CD4-positive, alpha-beta memory T cell (primary cell): ENCODE measurements at regions of chr15 and their contacts with region 1.

Region 1: GRCh38 chr15:38563723-38564519 is 693 bp downstream of the RASGRP1 start:
- DNase-seq: peak; percentile 82 to 89 (median 84)
- H3K4me3 ChIP-seq: peak overlapping the region; percentile 95 to 97
- H3K4me3 Mint-ChIP-seq: peak overlapping the region; percentile 94 to 99 (median 98)
- H3K27ac ChIP-seq: peak overlapping the region; percentile 89
- H3K27ac Mint-ChIP-seq: peak overlapping the region; percentile 79 to 97 (median 95)
- H3K4me1 ChIP-seq: peaks cover 64% of the 10 kb centered on the region
- H3K4me1 Mint-ChIP-seq: peaks cover 44 to 78% (median 60%) of the 10 kb centered on the region in 4 donors
- H3K27me3 ChIP-seq: no peaks in the 10 kb centered on the region
- H3K27me3 Mint-ChIP-seq: no peaks in the 10 kb centered on the region

Region 2: DNA sequence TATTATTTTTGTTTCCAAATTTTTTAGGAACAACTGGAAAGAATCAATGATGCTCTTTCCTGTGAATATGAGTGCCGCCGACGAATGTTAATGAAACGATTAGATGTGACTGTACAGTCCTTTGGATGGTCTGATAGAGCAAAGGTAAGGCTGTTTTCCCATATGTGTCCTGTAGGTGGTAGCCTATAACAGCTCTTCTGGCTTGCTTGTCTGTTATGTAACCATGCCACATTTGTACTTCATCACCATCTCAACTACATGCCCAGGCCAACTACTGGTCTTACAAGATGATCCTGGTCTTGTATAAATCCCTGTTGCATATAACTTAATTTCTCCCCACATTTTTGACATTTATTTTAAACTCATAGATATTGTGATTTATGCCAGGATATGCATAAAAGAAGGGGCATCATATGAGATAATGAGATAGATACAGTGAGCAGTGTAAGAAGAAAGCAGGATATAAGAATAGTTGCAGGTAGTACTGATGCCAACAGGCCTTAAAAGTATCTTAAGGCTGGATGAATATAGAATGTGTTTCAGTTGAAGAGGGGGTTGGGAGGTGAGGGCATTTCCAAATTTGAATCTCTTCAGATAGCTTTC is 89.7 kb before region 1 on chr15:
- CTCF ChIA-PET with region 1: interaction called, 26 read pairs
- POLR2A ChIA-PET with region 1: interaction called, 5 read pairs
- intact Hi-C with region 1: loop called (anchors 1 kb)
- DNase-seq: peak; percentile 57 to 73 (median 69)
- H3K4me3 ChIP-seq: no peak overlapping the region
- H3K4me3 Mint-ChIP-seq: peak overlapping the region in 1 of 8 donors; percentile 2
- H3K27ac ChIP-seq: peak overlapping the region; percentile 25
- H3K27ac Mint-ChIP-seq: peak overlapping the region; percentile 59 to 86 (median 81)
- H3K4me1 ChIP-seq: peaks cover 5% of the 10 kb centered on the region
- H3K4me1 Mint-ChIP-seq: peaks cover 8 to 9% (median 8%) of the 10 kb centered on the region in 4 donors
- H3K27me3 ChIP-seq: no peaks in the 10 kb centered on the region
- H3K27me3 Mint-ChIP-seq: no peaks in the 10 kb centered on the region

Region 3: DNA sequence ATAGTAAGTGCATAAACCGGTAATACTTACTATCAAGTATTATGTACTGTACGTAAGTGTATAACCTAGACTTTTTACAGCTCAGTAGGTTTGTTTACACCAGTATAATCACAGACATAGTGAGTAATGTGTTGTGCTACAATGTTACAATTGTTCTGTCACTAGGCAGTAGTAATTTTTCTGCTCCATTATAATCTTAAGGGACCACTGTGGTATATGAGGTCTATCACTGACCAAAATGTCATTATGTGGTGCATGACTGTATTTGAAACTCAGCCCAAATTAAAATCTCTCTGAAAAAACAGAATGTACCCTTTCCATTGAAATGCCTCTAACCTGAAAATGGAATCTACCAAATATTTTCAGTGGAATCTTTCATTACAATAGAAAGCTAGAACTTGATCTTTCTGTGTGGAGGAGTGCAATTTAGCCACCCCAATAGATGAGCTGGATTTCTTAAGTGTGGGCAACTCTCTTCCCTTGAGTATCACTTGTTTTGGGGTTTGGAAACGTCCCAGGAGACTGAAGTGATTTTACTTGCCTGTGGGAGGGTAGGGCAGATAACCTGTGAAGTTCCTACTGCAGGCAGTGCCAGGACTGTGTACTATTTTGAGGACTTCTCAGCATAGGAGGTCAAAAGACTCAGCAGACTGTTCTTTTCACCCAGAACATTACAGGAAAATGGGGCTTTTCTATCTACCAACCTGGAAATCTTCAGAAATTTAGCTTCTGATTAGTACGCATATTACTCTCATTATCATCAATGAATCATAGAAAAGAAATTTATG is 59.0 kb before region 1 on chr15:
- CTCF ChIA-PET with region 1: interaction called, 12 read pairs
- POLR2A ChIA-PET with region 1: interaction called, 5 read pairs
- intact Hi-C with region 1: no loop called
- DNase-seq: no peak
- H3K4me3 ChIP-seq: no peak overlapping the region
- H3K4me3 Mint-ChIP-seq: no peak overlapping the region
- H3K27ac ChIP-seq: no peak overlapping the region
- H3K27ac Mint-ChIP-seq: peak overlapping the region in 6 of 7 donors; percentile 38 to 89 (median 59)
- H3K4me1 ChIP-seq: peaks cover 3% of the 10 kb centered on the region
- H3K4me1 Mint-ChIP-seq: peaks cover 2 to 15% (median 7%) of the 10 kb centered on the region in 4 donors
- H3K27me3 ChIP-seq: no peaks in the 10 kb centered on the region
- H3K27me3 Mint-ChIP-seq: no peaks in the 10 kb centered on the region

Region 4: GRCh38 chr15:38536201-38536676 is 27.7 kb before region 1 on chr15:
- CTCF ChIA-PET with region 1: interaction called, 51 read pairs
- POLR2A ChIA-PET with region 1: interaction called, 23 read pairs
- intact Hi-C with region 1: no loop called
- DNase-seq: no peak
- H3K4me3 ChIP-seq: no peak overlapping the region
- H3K4me3 Mint-ChIP-seq: peak overlapping the region in 4 of 8 donors; percentile 14 to 73 (median 34)
- H3K27ac ChIP-seq: no peak overlapping the region
- H3K27ac Mint-ChIP-seq: peak overlapping the region in 6 of 7 donors; percentile 36 to 84 (median 59)
- H3K4me1 ChIP-seq: peaks cover 97% of the 10 kb centered on the region
- H3K4me1 Mint-ChIP-seq: peaks cover 83 to 100% (median 92%) of the 10 kb centered on the region in 4 donors
- H3K27me3 ChIP-seq: no peaks in the 10 kb centered on the region
- H3K27me3 Mint-ChIP-seq: no peaks in the 10 kb centered on the region

Region 5: DNA sequence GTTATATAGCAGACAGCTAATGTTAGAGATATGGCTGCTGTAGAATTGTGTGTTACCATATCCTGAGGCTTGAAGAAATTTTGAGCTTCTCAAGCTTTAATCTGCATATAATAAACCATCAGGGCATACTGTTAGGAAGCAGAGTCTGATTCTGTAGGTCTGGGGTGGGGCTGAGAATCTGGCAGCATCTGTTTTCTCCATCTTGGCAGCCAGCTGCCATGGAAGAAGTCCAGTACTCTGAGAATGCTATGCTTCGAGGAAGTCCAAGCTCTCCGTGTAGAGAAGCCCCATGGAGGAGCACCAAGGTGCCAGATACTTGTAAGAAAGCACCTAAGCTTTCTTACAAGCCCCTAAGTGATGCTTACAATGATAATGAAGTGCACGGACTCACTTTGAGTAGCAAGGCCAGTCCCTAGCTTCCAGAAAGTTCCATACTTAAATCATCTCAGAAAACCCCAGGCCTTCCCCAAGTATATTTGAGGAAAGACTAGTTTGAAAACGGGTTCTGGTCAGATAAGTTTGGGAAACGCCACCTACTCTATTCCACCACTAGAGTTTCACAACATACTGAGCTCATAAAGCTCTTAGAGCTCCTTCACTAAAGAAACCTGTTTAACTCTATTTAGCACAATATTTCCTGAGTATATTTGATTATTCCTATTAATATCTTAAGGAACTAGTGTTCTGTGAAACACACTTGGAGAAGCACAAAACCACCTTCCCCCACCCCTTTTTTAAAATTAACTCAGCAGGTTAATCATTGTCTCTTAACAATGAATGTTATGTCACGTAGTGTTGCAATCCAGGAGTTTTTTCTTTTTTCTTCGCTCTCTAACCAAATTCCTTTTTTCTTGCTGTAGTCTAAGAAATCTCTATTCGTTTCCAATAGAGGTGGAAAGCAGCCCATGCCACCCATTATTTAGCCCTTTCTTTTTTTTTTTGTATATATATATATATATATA is 60.6 kb after region 1 on chr15:
- CTCF ChIA-PET with region 1: interaction called, 21 read pairs
- POLR2A ChIA-PET with region 1: interaction called, 4 read pairs
- intact Hi-C with region 1: no loop called
- DNase-seq: no peak
- H3K4me3 ChIP-seq: no peak overlapping the region
- H3K4me3 Mint-ChIP-seq: no peak overlapping the region
- H3K27ac ChIP-seq: no peak overlapping the region
- H3K27ac Mint-ChIP-seq: peak overlapping the region in 1 of 7 donors; percentile 36
- H3K4me1 ChIP-seq: peaks cover 5% of the 10 kb centered on the region
- H3K4me1 Mint-ChIP-seq: peaks cover 11 to 18% (median 12%) of the 10 kb centered on the region in 4 donors
- H3K27me3 ChIP-seq: no peaks in the 10 kb centered on the region
- H3K27me3 Mint-ChIP-seq: peaks cover 0 to 2% of the 10 kb centered on the region in 2 donors

Region 6: DNA sequence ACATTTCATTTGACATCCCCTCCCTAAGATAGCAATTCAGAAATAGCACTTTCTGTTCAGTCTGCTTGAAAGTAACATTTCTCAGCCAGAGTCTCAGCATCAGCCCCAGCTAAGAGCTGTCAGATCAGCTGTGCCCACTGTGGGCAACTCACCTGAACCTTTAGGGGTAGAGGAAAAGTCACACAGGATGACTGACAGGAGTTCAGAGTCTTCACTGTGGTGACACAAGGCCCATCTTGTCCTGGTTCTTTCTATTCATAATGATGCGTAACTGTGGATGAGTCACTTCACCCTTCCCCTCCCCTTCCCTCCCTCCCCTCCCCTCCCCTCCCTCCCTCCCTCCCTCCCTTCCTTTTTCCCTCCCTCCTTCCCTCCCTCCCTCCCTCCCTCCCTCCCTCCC is 96.8 kb after region 1 on chr15:
- CTCF ChIA-PET with region 1: interaction called, 29 read pairs
- POLR2A ChIA-PET with region 1: interaction called, 16 read pairs
- intact Hi-C with region 1: no loop called
- DNase-seq: peak in 2 of 5 donors; percentile 32 to 64
- H3K4me3 ChIP-seq: no peak overlapping the region
- H3K4me3 Mint-ChIP-seq: peak overlapping the region in 6 of 8 donors; percentile 3 to 76 (median 62)
- H3K27ac ChIP-seq: no peak overlapping the region
- H3K27ac Mint-ChIP-seq: peak overlapping the region; percentile 23 to 90 (median 86)
- H3K4me1 ChIP-seq: peaks cover 62% of the 10 kb centered on the region
- H3K4me1 Mint-ChIP-seq: peaks cover 39 to 69% (median 53%) of the 10 kb centered on the region in 4 donors
- H3K27me3 ChIP-seq: no peaks in the 10 kb centered on the region
- H3K27me3 Mint-ChIP-seq: no peaks in the 10 kb centered on the region

Region 7: DNA sequence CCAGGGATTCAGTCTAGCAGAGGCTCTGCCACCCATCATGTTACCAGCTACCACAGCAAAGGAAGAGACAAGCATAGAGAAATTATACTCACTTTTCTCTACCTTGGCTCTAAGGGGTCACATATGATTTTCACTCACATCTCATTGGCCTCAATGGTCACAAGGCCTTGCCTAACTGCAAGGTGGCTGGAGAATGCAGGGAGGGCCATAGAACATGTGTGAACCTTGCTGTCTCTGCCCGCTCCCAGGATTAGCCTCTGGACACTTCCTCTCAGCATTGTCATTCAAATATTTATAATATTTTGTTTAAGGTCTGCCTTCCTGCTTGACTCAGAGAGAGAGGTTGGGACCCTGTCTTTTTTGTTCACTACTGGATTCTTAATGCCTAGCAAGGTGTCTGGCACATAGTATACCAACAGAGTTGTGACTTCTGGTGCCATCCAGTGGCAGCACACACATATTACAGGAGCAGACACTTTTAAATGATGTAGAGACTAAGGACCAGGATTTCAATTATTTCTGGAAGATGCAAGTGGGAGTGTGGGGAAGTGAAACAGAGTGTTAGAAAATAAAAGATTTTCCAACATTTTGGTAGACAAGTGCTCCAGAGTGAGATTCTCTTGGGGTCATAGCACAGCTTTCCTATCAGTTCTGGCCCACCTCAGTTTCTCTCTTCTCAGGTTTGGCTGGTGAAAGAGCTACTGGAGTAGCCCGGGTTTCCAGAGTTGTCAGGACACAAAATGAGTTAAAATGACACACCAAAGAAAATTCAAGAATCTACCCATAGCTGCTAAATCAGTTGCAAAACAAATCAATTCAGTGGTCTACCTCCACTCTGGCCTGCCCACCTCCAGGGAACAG is 119.7 kb after region 1 on chr15:
- CTCF ChIA-PET with region 1: interaction called, 717 read pairs
- POLR2A ChIA-PET with region 1: interaction called, 452 read pairs
- intact Hi-C with region 1: loop called (anchors 1 kb)
- DNase-seq: peak; percentile 68 to 76 (median 73)
- H3K4me3 ChIP-seq: no peak overlapping the region
- H3K4me3 Mint-ChIP-seq: peak overlapping the region in 7 of 8 donors; percentile 27 to 77 (median 55)
- H3K27ac ChIP-seq: peak overlapping the region; percentile 31
- H3K27ac Mint-ChIP-seq: peak overlapping the region; percentile 78 to 96 (median 94)
- H3K4me1 ChIP-seq: peaks cover 65% of the 10 kb centered on the region
- H3K4me1 Mint-ChIP-seq: peaks cover 61 to 73% (median 63%) of the 10 kb centered on the region in 4 donors
- H3K27me3 ChIP-seq: no peaks in the 10 kb centered on the region
- H3K27me3 Mint-ChIP-seq: no peaks in the 10 kb centered on the region